ENCODE measurements at regions of chr14 and their contacts with region 1.

Region 1: DNA sequence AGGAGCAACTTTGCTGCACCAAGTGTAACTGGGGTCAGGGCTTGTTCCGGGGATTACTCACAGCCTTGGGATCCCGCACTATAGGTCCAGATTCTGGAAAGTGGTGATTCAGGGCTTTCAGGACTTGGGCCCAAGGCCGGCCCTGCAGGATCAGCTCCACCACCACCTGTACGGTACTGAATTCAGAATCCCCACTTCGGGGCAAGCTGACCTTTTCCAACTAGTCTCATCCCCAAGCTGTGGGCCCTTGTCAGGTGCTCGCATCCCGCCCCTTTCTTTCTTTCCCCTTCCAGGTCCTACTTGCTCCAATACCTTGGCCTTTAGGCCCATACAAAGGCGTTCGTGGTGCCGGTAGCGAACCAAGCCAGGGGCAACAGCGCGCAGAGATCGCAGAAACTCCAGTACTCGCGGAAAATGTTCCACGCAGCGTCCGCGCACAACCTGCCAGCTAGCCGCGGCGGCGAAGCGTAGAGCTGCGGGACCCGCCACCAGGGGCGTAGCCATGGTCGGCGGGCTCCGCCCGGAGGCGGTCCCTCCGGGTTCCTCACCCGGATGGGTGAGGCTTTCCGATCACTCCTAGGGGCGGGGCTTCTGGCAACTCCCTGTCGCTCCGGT is 487 bp downstream of the TINF2 start:
- DNase-seq: peak; percentile 92 to 97
- ATAC-seq: peak; percentile 79 to 92 (median 79)
- H3K4me3 ChIP-seq: peak overlapping the region; percentile 74
- H3K4me3 Mint-ChIP-seq: peak overlapping the region; percentile 98
- H3K27ac ChIP-seq: peak overlapping the region; percentile 97
- H3K27ac Mint-ChIP-seq: peak overlapping the region; percentile 100
- H3K4me1 ChIP-seq: peaks cover 41% of the 10 kb centered on the region
- H3K4me1 Mint-ChIP-seq: peaks cover 61 to 71% of the 10 kb centered on the region in 2 donors
- H3K27me3 ChIP-seq: no peaks in the 10 kb centered on the region
- H3K27me3 Mint-ChIP-seq: no peaks in the 10 kb centered on the region
- CTCF ChIP-seq: peak; percentile 39

Region 2: DNA sequence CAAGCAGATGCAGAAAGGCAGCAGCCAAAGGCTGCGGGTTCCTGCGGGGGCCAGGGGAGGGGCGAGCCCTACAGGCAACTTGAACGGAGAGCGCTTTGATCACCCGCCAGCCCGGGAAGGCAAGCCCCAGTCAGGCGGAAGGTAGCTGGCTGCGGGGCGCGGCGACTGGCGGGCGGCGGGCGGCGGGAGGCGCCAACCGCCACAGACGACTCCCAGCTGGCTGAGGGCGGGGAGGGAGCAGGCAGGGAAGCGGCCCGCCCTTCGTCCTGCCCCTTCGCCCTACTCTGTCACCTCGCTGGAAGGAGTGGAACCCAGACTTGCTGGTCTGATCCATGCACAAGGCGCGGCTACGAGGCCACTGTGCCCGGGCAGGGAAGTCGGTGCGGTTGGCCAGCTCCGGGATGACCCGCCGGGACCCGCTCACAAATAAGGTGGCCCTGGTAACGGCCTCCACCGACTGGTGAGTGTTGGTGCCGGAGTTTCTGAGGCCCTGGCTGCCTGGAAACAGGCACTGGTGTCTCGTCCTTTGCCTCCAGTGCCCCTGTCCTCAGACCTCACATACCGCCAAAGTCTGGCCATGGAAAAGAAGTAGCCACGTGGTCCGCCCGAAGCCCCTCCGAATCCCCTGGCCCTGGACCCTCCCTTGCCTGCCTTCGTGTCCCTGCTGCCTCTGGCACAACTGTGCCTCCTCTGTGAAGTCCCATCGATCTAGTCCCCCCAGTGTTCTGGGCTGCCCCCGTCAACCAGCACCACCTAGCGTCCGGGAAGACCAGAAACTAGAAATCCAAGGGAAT is 205.6 kb before region 1 on chr14:
- intact Hi-C with region 1: no loop called
- DNase-seq: peak; percentile 49 to 78
- ATAC-seq: peak; percentile 82 to 90 (median 85)
- H3K4me3 ChIP-seq: peak overlapping the region; percentile 62
- H3K4me3 Mint-ChIP-seq: peak overlapping the region; percentile 90
- H3K27ac ChIP-seq: peak overlapping the region; percentile 65
- H3K27ac Mint-ChIP-seq: peak overlapping the region; percentile 69 to 95
- H3K4me1 ChIP-seq: peaks cover 4% of the 10 kb centered on the region
- H3K4me1 Mint-ChIP-seq: peaks cover 9 to 19% of the 10 kb centered on the region in 2 donors
- H3K27me3 ChIP-seq: no peaks in the 10 kb centered on the region
- H3K27me3 Mint-ChIP-seq: no peaks in the 10 kb centered on the region
- CTCF ChIP-seq: peak; percentile 59

Region 3: DNA sequence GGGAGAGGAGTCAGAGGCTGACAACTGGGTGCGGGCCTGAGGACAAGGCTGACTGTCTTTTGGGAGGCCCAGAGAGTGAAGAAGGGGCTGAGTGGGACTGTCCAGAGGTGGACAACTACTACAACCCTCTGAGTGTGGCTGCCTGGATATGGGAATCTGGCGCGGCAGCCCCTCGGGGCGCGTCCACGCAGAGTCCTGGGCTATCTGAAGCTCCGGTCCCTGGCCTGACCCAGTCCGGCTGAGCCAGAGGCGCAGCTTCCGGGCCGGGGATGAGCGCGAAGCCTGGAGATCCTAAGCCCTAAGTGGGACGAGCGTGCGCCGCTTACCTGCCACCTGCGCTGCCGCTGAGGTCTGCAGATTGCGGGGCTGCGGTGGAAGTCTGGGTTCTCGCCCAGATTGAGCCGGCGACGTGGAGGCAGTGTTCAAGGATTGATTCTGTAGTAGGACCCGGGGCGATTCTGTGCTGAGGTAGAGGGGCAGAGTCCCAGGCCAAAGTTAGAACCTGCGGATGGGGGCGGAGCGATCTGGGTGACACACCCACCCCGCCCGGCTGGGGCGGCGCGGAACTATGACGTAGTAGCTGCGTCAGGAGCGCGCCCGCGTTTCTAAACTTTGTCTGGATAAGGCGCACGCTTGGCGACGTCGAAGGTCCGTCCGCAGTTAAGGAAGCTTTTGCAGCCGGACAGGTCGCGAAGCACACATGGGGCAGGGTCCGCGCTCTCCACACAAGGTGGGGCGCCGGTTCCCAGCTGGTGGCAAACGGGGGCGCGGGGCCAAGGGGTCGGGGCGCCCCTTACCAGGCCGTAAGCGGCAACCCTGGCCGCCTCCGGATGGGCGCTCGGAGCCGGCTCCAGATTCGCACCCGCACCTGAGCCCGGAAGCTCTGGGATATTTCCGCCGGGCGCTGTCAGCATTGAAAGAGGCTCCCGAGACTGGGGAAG is 57.6 kb after region 1 on chr14 and contains the starts of genes DHRS1 and NOP9:
- intact Hi-C with region 1: loop called (anchors 1 kb)
- DNase-seq: peak; percentile 95 to 96
- ATAC-seq: peak; percentile 79 to 89 (median 82)
- H3K4me3 ChIP-seq: peak within 1 kb of the TSS; percentile 51
- H3K4me3 Mint-ChIP-seq: peak within 1 kb of the TSS; percentile 91
- H3K27ac ChIP-seq: peak within 1 kb of the TSS; percentile 61
- H3K27ac Mint-ChIP-seq: peak within 1 kb of the TSS; percentile 91 to 92
- H3K4me1 ChIP-seq: peaks cover 25% of the 10 kb centered on the region
- H3K4me1 Mint-ChIP-seq: peaks cover 42 to 55% of the 10 kb centered on the region in 2 donors
- H3K27me3 ChIP-seq: no peaks in the 10 kb centered on the region
- H3K27me3 Mint-ChIP-seq: no peaks in the 10 kb centered on the region
- CTCF ChIP-seq: no peak
- total RNA-seq, gene DHRS1: 39.8 to 59.0 (median 43.3) TPM
- total RNA-seq, gene NOP9: 34.9 to 47.8 (median 39.2) TPM

Region 4: GRCh38 chr14:24310646-24311604 is 69.0 kb after region 1 on chr14 and contains the start of gene LTB4R:
- intact Hi-C with region 1: loop called (anchors 5 kb)
- DNase-seq: peak; percentile 69 to 87
- ATAC-seq: peak; percentile 75 to 87 (median 81)
- H3K4me3 ChIP-seq: peak within 1 kb of the TSS; percentile 45
- H3K4me3 Mint-ChIP-seq: peak within 1 kb of the TSS; percentile 88
- H3K27ac ChIP-seq: peak within 1 kb of the TSS; percentile 84
- H3K27ac Mint-ChIP-seq: peak within 1 kb of the TSS; percentile 94 to 96
- H3K4me1 ChIP-seq: peaks cover 77% of the 10 kb centered on the region
- H3K4me1 Mint-ChIP-seq: peaks cover 71 to 92% of the 10 kb centered on the region in 2 donors
- H3K27me3 ChIP-seq: no peaks in the 10 kb centered on the region
- H3K27me3 Mint-ChIP-seq: no peaks in the 10 kb centered on the region
- CTCF ChIP-seq: peak; percentile 37
- total RNA-seq, gene LTB4R: 33.5 to 55.7 (median 49.7) TPM

Region 5: GRCh38 chr14:24431569-24432258 is 189.8 kb after region 1 on chr14:
- intact Hi-C with region 1: loop called (anchors 10 kb)
- DNase-seq: peak; percentile 82 to 96
- ATAC-seq: peak; percentile 53 to 72 (median 57)
- H3K4me3 ChIP-seq: peak overlapping the region; percentile 93
- H3K4me3 Mint-ChIP-seq: peak overlapping the region; percentile 84
- H3K27ac ChIP-seq: peak overlapping the region; percentile 99
- H3K27ac Mint-ChIP-seq: peak overlapping the region; percentile 87 to 97
- H3K4me1 ChIP-seq: peaks cover 36% of the 10 kb centered on the region
- H3K4me1 Mint-ChIP-seq: peaks cover 18 to 45% of the 10 kb centered on the region in 2 donors
- H3K27me3 ChIP-seq: no peaks in the 10 kb centered on the region
- H3K27me3 Mint-ChIP-seq: no peaks in the 10 kb centered on the region
- CTCF ChIP-seq: peak; percentile 81

Region 6: DNA sequence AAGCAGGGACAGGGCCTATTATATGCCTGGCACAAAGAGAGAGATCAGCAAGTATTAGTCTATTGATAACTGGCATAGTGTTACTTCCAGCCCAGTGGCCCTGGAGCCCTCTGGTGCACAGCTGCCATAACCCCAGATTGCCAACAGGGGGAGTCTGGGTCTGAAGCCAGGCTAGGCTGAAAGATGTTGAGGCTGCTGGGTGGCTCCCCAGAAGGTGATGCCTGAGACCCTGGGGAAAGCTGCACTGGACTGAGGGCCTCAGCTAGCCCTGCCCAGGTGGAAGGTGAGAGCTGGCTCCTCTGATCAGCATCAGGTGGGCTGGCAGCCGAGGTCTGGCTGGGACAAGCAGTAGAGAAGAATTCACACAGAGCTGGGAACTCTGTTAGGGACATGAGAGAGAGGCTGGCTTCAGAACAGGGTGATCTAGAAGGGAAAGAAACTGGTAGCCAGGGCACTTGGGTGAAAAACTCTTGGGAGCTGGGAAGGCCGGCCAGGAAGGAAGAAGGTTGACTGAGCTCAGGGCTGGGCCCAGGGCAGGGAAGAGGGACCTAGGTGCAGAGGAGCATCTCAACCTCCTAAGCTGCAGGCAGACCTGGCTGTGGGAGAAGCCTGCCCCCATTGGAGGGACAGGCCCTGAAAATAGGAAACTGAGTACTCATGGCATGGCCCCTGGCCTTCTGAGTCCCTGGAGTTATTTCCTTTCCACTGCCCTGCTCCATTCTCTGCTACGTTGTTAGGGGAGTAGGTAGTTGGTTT is 363.7 kb after region 1 on chr14:
- intact Hi-C with region 1: no loop called
- DNase-seq: peak; percentile 70 to 78
- ATAC-seq: peak; percentile 62 to 71 (median 66)
- H3K4me3 ChIP-seq: peak overlapping the region; percentile 1
- H3K4me3 Mint-ChIP-seq: peak overlapping the region; percentile 95
- H3K27ac ChIP-seq: peak overlapping the region; percentile 83
- H3K27ac Mint-ChIP-seq: peak overlapping the region; percentile 99
- H3K4me1 ChIP-seq: peaks cover 55% of the 10 kb centered on the region
- H3K4me1 Mint-ChIP-seq: peaks cover 55 to 58% of the 10 kb centered on the region in 2 donors
- H3K27me3 ChIP-seq: no peaks in the 10 kb centered on the region
- H3K27me3 Mint-ChIP-seq: no peaks in the 10 kb centered on the region
- CTCF ChIP-seq: peak; percentile 96

Region 7: GRCh38 chr14:24690492-24690891 is 448.6 kb after region 1 on chr14:
- intact Hi-C with region 1: loop called (anchors 2 kb)
- DNase-seq: peak in 1 of 2 donors; percentile 55
- ATAC-seq: peak in 1 of 3 donors; percentile 17
- H3K4me3 ChIP-seq: no peak overlapping the region
- H3K4me3 Mint-ChIP-seq: peak overlapping the region; percentile 22
- H3K27ac ChIP-seq: no peak overlapping the region
- H3K27ac Mint-ChIP-seq: peak overlapping the region in 1 of 2 donors; percentile 78
- H3K4me1 ChIP-seq: peaks cover 57% of the 10 kb centered on the region
- H3K4me1 Mint-ChIP-seq: peaks cover 62% of the 10 kb centered on the region in 2 donors
- H3K27me3 ChIP-seq: no peaks in the 10 kb centered on the region
- H3K27me3 Mint-ChIP-seq: no peaks in the 10 kb centered on the region
- CTCF ChIP-seq: peak; percentile 40